Transverse colon (tissue), 4 donors: ENCODE measurements at regions of chr16 and their contacts with region 1.

Region 1: GRCh38 chr16:24580665-24581064 is 41.3 kb downstream of the RBBP6 start:
- DNase-seq: no peak
- H3K4me3 ChIP-seq: no peak overlapping the region
- H3K27ac ChIP-seq: no peak overlapping the region
- H3K4me1 ChIP-seq: no peaks in the 10 kb centered on the region
- H3K27me3 ChIP-seq: no peaks in the 10 kb centered on the region
- CTCF ChIP-seq: peak in 3 of 5 experiments; percentile 5 to 16 (median 10)
- EP300 ChIP-seq: no peak
- POLR2A ChIP-seq: no peak

Region 2: GRCh38 chr16:24382762-24383407 is 197.8 kb before region 1 on chr16:
- in situ Hi-C with region 1: no loop called
- intact Hi-C with region 1: no loop called
- DNase-seq: no peak
- H3K4me3 ChIP-seq: no peak overlapping the region
- H3K27ac ChIP-seq: no peak overlapping the region
- H3K4me1 ChIP-seq: no peaks in the 10 kb centered on the region
- H3K27me3 ChIP-seq: no peaks in the 10 kb centered on the region
- CTCF ChIP-seq: no peak
- EP300 ChIP-seq: no peak
- POLR2A ChIP-seq: no peak

Region 3: DNA sequence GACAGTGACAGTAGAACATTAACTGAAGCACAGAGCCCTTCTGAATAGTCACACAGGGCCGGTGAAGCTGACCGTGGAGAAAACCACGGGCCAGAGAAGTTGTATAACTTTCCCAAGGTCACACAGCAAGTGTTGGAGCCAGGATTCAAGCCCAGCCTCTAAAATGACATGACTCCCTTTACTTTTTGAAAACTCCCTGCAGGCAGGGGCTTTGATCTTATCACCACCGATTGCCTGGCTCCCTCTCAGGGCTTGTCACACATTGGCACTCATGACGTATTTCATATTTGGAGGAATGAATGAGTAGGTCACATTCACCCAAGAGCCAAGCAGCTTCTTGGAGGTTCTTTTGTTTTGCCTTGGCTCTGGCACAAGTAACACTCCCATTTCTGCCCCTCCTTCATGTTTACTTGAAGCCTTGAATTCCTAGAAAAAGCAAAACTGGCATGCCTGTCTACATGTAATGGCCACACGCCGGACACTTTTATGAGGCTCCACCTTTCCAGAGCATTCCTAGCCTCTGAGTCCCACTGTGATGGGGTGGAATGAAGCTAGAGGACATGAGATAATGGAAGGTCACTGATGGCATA is 54.6 kb before region 1 on chr16:
- in situ Hi-C with region 1: no loop called
- intact Hi-C with region 1: no loop called
- DNase-seq: no peak
- H3K4me3 ChIP-seq: no peak overlapping the region
- H3K27ac ChIP-seq: no peak overlapping the region
- H3K4me1 ChIP-seq: no peaks in the 10 kb centered on the region
- H3K27me3 ChIP-seq: no peaks in the 10 kb centered on the region
- CTCF ChIP-seq: no peak
- EP300 ChIP-seq: no peak
- POLR2A ChIP-seq: no peak

Region 4: DNA sequence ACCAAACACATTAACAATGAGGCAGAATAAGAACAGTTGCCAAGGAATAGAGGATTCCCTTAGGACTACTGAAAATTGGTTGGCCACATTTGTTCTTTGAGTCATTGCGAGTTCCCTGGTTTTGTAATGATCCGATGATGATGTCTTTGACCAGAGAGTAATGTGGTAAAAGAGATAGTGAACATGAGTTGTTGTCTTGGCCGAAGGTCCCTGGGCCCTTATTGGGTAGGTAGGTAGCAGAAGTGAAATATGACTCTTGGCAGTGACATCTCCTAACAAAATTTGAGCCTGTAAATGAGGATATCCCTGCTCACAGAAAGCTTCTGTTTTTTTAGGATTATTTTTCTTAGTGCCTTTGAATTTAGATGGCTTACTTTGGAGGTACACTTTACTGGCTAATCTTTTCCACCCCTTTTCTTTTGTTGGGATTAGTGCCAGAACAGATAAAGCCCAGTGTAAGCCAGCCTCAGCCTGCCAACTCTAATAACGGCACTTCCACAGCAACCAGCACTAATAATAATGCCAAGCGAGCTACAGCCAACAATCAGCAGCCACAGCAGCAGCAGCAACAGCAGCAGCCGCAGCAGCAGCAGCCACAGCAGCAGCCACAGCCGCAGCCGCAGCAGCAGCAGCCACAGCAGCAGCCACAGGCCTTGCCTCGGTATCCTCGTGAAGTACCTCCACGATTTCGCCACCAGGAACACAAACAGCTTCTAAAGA is 196.0 kb after region 1 on chr16:
- in situ Hi-C with region 1: loop called in 1 of 4 experiments (anchors 25 kb)
- intact Hi-C with region 1: no loop called
- DNase-seq: no peak
- H3K4me3 ChIP-seq: no peak overlapping the region
- H3K27ac ChIP-seq: peak overlapping the region; percentile 19 to 49 (median 40)
- H3K4me1 ChIP-seq: peaks cover 12 to 42% (median 24%) of the 10 kb centered on the region in 4 donors
- H3K27me3 ChIP-seq: no peaks in the 10 kb centered on the region
- CTCF ChIP-seq: no peak
- EP300 ChIP-seq: no peak
- POLR2A ChIP-seq: no peak

Region 5: GRCh38 chr16:24789881-24790280 is 209.2 kb after region 1 on chr16:
- in situ Hi-C with region 1: loop called in 1 of 4 experiments (anchors 25 kb)
- intact Hi-C with region 1: loop called (anchors 10 kb)
- DNase-seq: no peak
- H3K4me3 ChIP-seq: no peak overlapping the region
- H3K27ac ChIP-seq: no peak overlapping the region
- H3K4me1 ChIP-seq: peaks cover 0 to 9% (median 0%) of the 10 kb centered on the region in 4 donors
- H3K27me3 ChIP-seq: no peaks in the 10 kb centered on the region
- CTCF ChIP-seq: no peak
- EP300 ChIP-seq: no peak
- POLR2A ChIP-seq: no peak